ENCODE measurements at regions of chr1 and their contacts with region 1.

Region 1: DNA sequence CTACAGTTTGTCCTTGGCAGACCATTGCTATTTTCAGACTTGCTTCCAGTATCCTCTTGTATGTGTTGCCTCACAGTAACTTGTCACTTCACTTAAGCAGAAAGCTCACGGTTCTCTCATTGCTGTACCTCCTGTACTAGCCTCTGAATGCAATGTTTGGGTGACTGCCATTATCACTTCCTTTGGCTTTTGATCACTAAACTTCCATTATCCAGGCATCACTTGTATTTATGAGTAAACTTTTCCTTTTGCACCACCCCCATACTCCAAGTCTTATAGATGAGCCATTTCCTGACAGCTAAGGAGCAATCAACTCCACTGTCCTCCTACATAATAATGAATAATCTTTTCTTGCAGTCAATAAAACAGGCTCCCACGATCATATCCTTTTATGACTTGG is 255.3 kb downstream of the PDE4B start:
- DNase-seq: no peak
- H3K4me3 ChIP-seq: no peak overlapping the region
- H3K27ac ChIP-seq: no peak overlapping the region
- H3K4me1 ChIP-seq: no peaks in the 10 kb centered on the region
- H3K27me3 ChIP-seq: no peaks in the 10 kb centered on the region
- CTCF ChIP-seq: no peak
- EP300 ChIP-seq: no peak
- POLR2A ChIP-seq: no peak

Region 2: GRCh38 chr1:65979136-65980044 is 68.6 kb before region 1 on chr1:
- in situ Hi-C with region 1: loop called in 1 of 4 experiments (anchors 10 kb)
- intact Hi-C with region 1: no loop called
- DNase-seq: no peak
- H3K4me3 ChIP-seq: no peak overlapping the region
- H3K27ac ChIP-seq: no peak overlapping the region
- H3K4me1 ChIP-seq: no peaks in the 10 kb centered on the region
- H3K27me3 ChIP-seq: no peaks in the 10 kb centered on the region
- CTCF ChIP-seq: no peak
- EP300 ChIP-seq: no peak
- POLR2A ChIP-seq: no peak